ENCODE measurements at regions of chr1 and their contacts with region 1.

Region 1: DNA sequence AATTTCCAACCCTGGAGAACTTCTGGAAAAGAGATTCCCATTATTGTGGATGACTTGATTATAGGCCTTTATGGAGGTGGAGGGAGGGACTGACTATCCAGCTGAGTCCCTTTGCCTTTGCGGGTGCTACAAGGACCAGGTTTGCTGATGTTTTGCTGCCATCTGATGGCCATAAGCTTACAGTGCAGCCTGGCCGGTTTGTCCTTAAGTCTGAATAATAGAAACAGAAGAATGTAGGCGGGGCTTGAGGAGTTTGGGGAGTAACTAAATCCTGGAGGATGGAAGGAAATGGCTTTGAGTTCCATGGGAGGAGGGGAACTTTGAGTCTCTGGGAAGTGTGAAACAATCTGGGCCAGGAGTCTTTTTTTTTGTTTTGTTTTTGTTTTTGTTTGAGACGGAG is 55.7 kb upstream of the CD1D start:
- DNase-seq: peak; percentile 25 to 70 (median 58)
- ATAC-seq: peak; percentile 94
- H3K4me3 ChIP-seq: no peak overlapping the region
- H3K4me3 Mint-ChIP-seq: no peak overlapping the region
- H3K27ac ChIP-seq: no peak overlapping the region
- H3K27ac Mint-ChIP-seq: no peak overlapping the region
- H3K4me1 ChIP-seq: no peaks in the 10 kb centered on the region
- H3K4me1 Mint-ChIP-seq: peaks cover 0 to 5% (median 3%) of the 10 kb centered on the region in 7 donors
- H3K27me3 ChIP-seq: no peaks in the 10 kb centered on the region
- H3K27me3 Mint-ChIP-seq: peaks cover 31 to 55% (median 36%) of the 10 kb centered on the region in 5 donors

Region 2: DNA sequence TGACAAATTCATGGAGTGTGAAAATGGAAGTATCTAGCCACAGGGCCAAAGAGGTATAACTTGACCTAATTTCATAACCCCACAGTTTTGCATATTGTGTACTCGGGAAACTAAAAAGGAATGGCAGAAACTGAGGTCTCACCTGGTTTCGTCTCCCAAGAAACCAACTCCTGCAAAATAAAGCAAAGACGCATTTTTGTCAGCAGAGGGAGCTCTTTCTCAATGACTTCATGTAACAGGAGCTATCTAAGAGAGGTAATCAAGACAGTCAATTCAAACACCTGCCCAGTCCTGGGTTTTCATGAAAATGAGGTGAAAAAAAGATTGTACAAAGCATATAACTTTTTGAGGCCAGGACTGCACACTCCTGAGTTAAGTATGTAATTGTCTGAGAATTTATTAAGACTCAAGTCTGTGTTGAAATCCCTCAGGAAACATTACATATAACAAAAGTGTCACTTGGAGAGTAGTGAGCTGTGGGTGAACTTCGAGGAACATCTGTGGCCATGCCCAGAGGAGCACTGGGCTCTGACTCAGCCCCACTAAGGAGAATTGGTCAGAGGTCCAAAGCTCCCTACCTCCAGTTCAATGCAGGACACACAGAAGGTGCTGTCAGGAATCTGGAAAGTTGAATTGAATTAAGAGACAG is 544.7 kb before region 1 on chr1:
- CTCF ChIA-PET with region 1: interaction called, 24 read pairs
- POLR2A ChIA-PET with region 1: no interaction called
- intact Hi-C with region 1: no loop called
- DNase-seq: peak in 5 of 9 donors; percentile 22 to 45 (median 30)
- ATAC-seq: no peak
- H3K4me3 ChIP-seq: no peak overlapping the region
- H3K4me3 Mint-ChIP-seq: no peak overlapping the region
- H3K27ac ChIP-seq: no peak overlapping the region
- H3K27ac Mint-ChIP-seq: no peak overlapping the region
- H3K4me1 ChIP-seq: no peaks in the 10 kb centered on the region
- H3K4me1 Mint-ChIP-seq: no peaks in the 10 kb centered on the region
- H3K27me3 ChIP-seq: no peaks in the 10 kb centered on the region
- H3K27me3 Mint-ChIP-seq: peaks cover under 1 to 20% (median 16%) of the 10 kb centered on the region in 5 donors

Region 3: DNA sequence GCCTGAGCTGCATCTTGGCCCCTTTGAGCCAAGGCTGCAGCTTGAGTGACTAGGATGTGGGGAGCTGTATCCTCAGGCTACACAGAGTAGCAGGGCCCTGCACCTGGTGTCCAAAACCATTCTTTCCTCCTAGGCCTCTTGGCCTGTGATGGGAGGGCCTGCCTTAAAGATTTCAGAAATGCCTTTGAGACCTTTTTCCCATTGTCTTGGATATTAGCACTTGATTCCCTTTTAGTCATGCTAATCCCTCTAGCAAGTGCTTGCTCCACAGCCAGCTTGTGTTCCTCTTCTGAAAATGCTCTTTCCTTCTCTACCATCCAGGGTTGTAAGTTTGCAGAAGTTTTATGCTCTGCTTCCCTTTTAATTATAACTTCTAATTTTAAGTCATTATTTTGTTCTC is 153.2 kb before region 1 on chr1:
- CTCF ChIA-PET with region 1: no interaction called
- POLR2A ChIA-PET with region 1: no interaction called
- intact Hi-C with region 1: no loop called
- DNase-seq: no peak
- ATAC-seq: no peak
- H3K4me3 ChIP-seq: no peak overlapping the region
- H3K4me3 Mint-ChIP-seq: no peak overlapping the region
- H3K27ac ChIP-seq: no peak overlapping the region
- H3K27ac Mint-ChIP-seq: no peak overlapping the region
- H3K4me1 ChIP-seq: no peaks in the 10 kb centered on the region
- H3K4me1 Mint-ChIP-seq: peaks cover 0 to 2% (median 0%) of the 10 kb centered on the region in 7 donors
- H3K27me3 ChIP-seq: no peaks in the 10 kb centered on the region
- H3K27me3 Mint-ChIP-seq: peaks cover 0 to 32% (median 19%) of the 10 kb centered on the region in 5 donors

Region 4: DNA sequence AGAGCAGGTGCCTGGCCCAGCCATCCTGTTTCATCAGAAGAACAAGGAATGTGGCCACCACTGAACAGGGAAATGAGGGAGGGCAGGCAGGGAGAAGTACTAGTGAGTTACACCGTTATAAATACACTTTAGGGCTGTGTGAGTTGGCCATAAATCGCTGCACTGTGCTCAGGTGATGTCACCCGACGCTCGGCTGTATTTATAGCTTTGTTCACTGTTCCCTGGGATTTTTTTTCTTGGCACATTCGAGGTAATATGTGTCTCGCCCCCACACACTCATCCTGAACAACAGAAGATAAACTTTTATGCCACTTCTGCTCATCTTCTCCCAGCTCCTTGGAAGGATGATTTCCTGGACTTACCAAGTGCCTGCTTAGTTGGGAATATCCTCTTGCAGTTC is 140.5 kb before region 1 on chr1:
- CTCF ChIA-PET with region 1: interaction called, 10 read pairs
- POLR2A ChIA-PET with region 1: no interaction called
- intact Hi-C with region 1: no loop called
- DNase-seq: no peak
- ATAC-seq: no peak
- H3K4me3 ChIP-seq: no peak overlapping the region
- H3K4me3 Mint-ChIP-seq: no peak overlapping the region
- H3K27ac ChIP-seq: no peak overlapping the region
- H3K27ac Mint-ChIP-seq: no peak overlapping the region
- H3K4me1 ChIP-seq: no peaks in the 10 kb centered on the region
- H3K4me1 Mint-ChIP-seq: no peaks in the 10 kb centered on the region
- H3K27me3 ChIP-seq: no peaks in the 10 kb centered on the region
- H3K27me3 Mint-ChIP-seq: peaks cover 1 to 38% (median 18%) of the 10 kb centered on the region in 5 donors

Region 5: DNA sequence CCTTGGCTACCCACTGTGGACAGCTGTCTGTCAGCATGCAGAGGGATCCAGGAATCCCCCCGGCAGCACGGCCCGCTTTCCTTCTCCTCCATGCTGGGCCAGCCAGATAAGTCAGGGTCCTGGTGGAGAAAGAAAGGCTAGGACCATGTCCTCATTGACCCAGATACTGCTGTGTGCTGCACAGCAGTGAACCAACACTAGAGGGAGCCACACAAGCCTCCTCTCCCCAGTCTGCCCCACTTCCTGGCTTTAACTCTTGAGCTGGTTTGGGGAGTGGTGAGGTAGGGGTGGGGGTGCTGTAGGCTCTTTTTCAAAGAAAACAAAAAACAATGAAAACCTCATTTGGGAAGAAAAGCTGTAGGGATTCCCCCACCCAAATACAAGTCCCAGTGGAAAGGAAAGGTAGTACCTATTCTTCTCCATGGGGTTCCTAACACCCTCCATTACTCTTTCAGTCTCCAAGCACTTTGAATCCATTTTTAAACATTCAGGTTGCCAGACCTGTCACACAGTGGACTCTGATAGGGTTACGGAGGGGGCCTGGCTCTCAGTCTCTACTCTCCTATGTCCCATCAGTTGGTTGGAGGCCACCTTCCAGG is 29.2 kb before region 1 on chr1:
- CTCF ChIA-PET with region 1: interaction called, 10 read pairs
- POLR2A ChIA-PET with region 1: no interaction called
- intact Hi-C with region 1: loop called (anchors 1 kb)
- DNase-seq: peak in 3 of 9 donors; percentile 13 to 40 (median 23)
- ATAC-seq: peak; percentile 72
- H3K4me3 ChIP-seq: no peak overlapping the region
- H3K4me3 Mint-ChIP-seq: no peak overlapping the region
- H3K27ac ChIP-seq: no peak overlapping the region
- H3K27ac Mint-ChIP-seq: no peak overlapping the region
- H3K4me1 ChIP-seq: no peaks in the 10 kb centered on the region
- H3K4me1 Mint-ChIP-seq: no peaks in the 10 kb centered on the region
- H3K27me3 ChIP-seq: no peaks in the 10 kb centered on the region
- H3K27me3 Mint-ChIP-seq: peaks cover 0 to 2% (median 0%) of the 10 kb centered on the region in 5 donors

Region 6: DNA sequence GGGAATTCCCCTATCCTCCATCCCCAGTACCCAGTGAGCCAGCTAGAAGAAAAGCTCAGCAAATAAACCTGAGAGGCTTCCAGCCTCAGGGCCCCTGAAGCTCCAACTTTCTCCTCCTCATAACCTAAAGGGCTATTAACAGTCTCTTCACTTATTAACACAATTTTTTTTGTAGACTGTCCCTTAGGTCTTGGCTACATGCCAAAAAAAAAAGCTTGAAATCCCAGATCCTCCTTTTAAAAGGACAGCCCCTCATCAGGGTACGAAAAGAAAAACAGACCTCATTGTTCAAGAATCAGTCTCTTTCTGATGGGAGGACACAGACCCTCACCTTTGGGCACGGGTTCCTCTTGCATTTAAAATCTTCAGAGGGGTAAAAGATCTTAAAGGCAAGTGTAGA is 17.1 kb before region 1 on chr1:
- CTCF ChIA-PET with region 1: no interaction called
- POLR2A ChIA-PET with region 1: no interaction called
- intact Hi-C with region 1: no loop called
- DNase-seq: no peak
- ATAC-seq: no peak
- H3K4me3 ChIP-seq: no peak overlapping the region
- H3K4me3 Mint-ChIP-seq: no peak overlapping the region
- H3K27ac ChIP-seq: no peak overlapping the region
- H3K27ac Mint-ChIP-seq: no peak overlapping the region
- H3K4me1 ChIP-seq: no peaks in the 10 kb centered on the region
- H3K4me1 Mint-ChIP-seq: peaks cover 0 to 3% (median 2%) of the 10 kb centered on the region in 7 donors
- H3K27me3 ChIP-seq: no peaks in the 10 kb centered on the region
- H3K27me3 Mint-ChIP-seq: peaks cover 12 to 38% (median 30%) of the 10 kb centered on the region in 5 donors

Region 7: GRCh38 chr1:159444511-159444910 is 1319.5 kb after region 1 on chr1:
- CTCF ChIA-PET with region 1: interaction called, 10 read pairs
- POLR2A ChIA-PET with region 1: no interaction called
- intact Hi-C with region 1: no loop called
- DNase-seq: no peak
- ATAC-seq: no peak
- H3K4me3 ChIP-seq: no peak overlapping the region
- H3K4me3 Mint-ChIP-seq: no peak overlapping the region
- H3K27ac ChIP-seq: no peak overlapping the region
- H3K27ac Mint-ChIP-seq: no peak overlapping the region
- H3K4me1 ChIP-seq: no peaks in the 10 kb centered on the region
- H3K4me1 Mint-ChIP-seq: peaks cover 0 to 3% (median 0%) of the 10 kb centered on the region in 7 donors
- H3K27me3 ChIP-seq: no peaks in the 10 kb centered on the region
- H3K27me3 Mint-ChIP-seq: peaks cover 0 to 32% (median 7%) of the 10 kb centered on the region in 5 donors

Measured in naive thymus-derived CD4-positive, alpha-beta T cell (primary cell).